Mammary epithelial cell (primary cell): ENCODE measurements at regions of chr2 and their contacts with region 1.

Region 1: DNA sequence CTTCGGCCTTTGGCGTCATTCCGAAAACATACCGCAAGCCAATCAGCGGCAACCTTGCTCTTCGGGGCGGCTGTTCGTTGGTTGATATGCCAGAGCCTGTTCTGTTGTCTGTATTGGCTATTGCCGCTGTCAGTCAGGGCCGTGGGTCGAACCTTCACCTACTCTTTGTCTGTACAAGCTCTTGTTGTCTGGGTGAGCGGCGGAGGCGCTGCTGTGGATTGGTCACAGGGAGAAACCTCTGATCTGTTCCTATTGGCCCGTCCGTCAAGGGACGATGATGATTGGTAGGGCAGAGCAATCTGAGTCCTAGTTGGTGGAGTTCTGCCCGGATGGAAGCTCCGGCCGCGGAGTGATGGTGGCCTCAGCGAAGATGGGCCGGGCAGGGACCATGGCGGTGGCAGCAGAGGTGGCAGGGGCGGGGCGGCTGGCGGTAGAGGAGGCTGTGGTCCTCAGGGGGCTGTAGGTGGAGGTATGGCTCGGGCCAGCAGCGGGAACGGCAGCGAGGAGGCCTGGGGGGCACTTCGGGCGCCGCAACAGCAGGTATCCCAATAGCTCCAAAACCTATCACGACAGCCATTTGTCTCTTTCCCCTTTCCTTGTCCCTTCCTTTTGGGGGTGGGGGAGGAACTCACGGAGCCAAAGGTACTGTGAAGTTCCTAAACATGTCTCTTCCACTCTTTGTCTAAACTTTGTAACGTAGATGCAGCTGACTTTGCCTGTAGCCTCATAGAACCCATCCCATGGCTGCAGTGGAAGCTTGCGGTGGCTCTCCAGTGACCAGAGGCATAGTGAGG is at the start of gene WBP1:
- DNase-seq: peak; percentile 100
- H3K4me3 ChIP-seq: peak within 1 kb of the TSS; percentile 82 to 94 (median 90)
- H3K27ac ChIP-seq: peak within 1 kb of the TSS; percentile 90
- H3K4me1 ChIP-seq: peaks cover 30% of the 10 kb centered on the region
- H3K27me3 ChIP-seq: no peaks in the 10 kb centered on the region
- CTCF ChIP-seq: no peak
- total RNA-seq, gene WBP1: 42.7 to 79.3 TPM

Region 2: DNA sequence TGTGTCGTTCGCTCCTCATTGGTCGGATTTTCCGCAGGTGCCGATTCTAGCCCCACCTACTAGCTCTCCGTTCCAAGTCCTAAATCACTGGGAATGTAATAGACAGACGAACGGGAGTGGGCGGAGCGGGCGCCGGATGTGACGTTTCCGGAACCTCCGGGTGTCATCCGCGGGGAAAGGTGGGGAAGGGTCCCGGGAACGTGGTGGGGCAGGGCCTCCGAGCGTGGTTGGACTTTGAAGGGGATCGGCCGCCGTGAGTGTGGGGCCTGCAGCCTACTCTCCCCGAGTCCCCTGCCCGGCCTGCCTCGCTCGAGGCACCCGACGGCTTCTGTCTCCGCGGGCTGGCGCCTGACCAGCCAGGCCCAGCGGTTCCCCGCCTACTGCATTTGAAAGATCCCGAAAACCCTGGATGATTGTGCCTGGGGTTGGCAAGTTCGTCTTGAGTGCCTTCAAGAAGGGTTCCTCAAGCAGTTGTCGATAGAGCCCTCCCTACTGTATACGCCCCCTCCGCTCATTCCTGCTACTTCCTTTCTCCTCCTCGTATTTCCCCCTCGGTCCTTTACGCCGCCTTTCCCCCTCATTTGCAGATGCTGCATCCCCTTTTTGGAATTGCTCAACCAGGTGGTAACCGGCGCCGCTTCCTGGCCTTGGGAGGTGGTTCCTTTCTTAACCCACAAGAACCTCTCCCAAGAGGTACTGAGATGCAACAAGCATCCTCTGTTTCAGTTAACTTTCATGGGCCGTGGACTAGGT is 629.3 kb before region 1 on chr2 and contains the start of gene STAMBP:
- CTCF ChIA-PET with region 1: interaction called, 10 read pairs
- dilution Hi-C with region 1: no loop called
- in situ Hi-C with region 1: no loop called
- intact Hi-C with region 1: no loop called
- DNase-seq: peak; percentile 94
- H3K4me3 ChIP-seq: peak within 1 kb of the TSS; percentile 70 to 85 (median 81)
- H3K27ac ChIP-seq: peak within 1 kb of the TSS; percentile 94
- H3K4me1 ChIP-seq: peaks cover 26% of the 10 kb centered on the region
- H3K27me3 ChIP-seq: no peaks in the 10 kb centered on the region
- CTCF ChIP-seq: no peak
- total RNA-seq, gene STAMBP: 52.2 to 77.8 TPM

Region 3: DNA sequence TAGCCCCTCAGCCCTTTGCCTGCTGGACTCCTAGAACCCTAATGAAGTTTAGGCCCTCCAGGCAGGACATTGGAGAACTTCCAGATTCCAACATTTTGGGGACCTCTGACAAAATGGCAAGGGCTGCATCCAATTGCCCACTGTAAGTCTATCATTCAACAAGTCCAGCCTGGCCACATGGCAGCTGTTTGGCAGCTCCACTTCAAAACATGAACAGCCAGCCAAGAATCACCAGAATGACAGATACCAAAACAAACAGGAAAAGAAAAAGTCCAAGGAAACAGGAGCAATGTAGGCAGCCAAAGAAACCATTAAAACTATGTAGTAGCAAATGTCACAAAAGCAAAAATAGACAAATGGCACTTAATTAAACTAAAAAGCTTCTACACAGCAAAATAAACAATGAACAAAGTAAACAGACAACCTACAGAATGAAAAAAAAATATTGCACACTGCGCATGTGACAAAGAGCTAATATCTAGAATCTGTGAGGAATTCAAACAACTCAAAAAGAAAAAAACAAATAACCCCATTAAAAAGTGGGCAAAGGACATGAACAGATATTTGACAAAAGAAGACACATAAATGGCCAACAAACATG is 140.5 kb before region 1 on chr2:
- CTCF ChIA-PET with region 1: no interaction called
- dilution Hi-C with region 1: no loop called
- in situ Hi-C with region 1: no loop called
- intact Hi-C with region 1: no loop called
- DNase-seq: no peak
- H3K4me3 ChIP-seq: no peak overlapping the region
- H3K27ac ChIP-seq: no peak overlapping the region
- H3K4me1 ChIP-seq: no peaks in the 10 kb centered on the region
- H3K27me3 ChIP-seq: no peaks in the 10 kb centered on the region
- CTCF ChIP-seq: no peak

Region 4: DNA sequence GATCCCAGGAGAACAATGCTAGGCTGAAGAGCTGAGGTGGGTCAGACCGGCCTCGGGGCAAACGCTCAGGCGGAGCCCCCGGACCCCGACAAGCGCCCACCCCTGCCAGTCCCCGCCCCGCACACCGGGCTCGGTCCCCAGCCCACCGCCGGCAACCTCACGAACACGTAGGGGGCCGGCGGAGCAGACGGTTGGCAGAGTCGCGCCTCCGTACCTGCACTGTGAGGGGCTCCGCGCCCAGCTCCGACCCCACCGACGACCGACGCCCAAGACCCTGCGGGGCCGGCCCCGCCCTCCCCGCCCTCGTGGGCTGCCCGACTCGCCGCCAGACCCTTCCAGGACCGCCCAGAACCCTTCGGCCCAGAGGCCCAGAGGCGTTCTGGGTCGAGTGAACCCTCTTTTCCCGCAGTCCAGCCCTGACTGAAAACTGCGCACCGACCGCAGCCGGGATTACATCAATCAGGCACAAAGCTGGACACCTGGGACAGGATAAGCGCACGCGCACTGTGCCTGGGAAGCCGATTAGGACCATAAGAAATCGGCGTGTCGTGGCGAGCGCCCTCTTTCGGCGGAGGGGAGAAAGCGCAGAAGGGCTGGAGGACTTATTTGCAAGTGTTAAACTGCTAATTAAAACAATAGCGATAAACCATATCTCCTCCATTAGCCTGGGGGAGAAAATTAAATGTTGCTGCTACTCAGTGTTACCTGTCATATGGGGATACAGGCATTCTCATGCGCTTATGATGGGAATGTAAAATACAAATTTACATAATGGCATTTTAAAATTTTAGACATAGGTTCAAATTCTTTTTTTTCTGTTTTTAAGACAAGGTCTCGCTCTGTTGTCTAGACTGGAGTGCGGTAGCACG is 66.5 kb before region 1 on chr2:
- CTCF ChIA-PET with region 1: no interaction called
- dilution Hi-C with region 1: loop called (anchors 5 kb)
- in situ Hi-C with region 1: no loop called
- intact Hi-C with region 1: loop called (anchors 2 kb)
- DNase-seq: peak; percentile 79
- H3K4me3 ChIP-seq: peak overlapping the region; percentile 79 to 84 (median 81)
- H3K27ac ChIP-seq: peak overlapping the region; percentile 94
- H3K4me1 ChIP-seq: peaks cover 26% of the 10 kb centered on the region
- H3K27me3 ChIP-seq: no peaks in the 10 kb centered on the region
- CTCF ChIP-seq: peak; percentile 99

Region 5: DNA sequence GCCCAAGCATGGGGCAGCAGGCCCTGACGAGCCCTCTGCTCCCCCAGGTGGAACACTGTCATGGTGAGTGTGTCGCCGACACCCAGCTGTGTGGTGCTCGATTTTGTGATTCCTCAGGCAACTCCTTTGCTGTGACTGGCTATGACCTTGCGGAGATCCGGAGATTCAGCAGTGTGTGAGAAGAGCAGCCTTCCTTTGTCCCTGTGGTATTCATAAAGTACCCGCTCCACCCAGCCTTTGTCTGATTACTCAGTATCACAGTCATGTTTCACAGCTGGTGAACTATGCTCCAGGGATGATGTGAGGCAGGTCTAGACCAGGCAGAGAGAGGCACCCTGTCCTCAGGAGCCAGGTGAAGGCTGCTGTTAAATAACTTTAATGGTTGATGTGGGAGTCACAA is 32.8 kb before region 1 on chr2:
- CTCF ChIA-PET with region 1: no interaction called
- dilution Hi-C with region 1: no loop called
- in situ Hi-C with region 1: no loop called
- intact Hi-C with region 1: loop called (anchors 1 kb)
- DNase-seq: peak; percentile 99
- H3K4me3 ChIP-seq: no peak overlapping the region
- H3K27ac ChIP-seq: peak overlapping the region; percentile 89
- H3K4me1 ChIP-seq: peaks cover 67% of the 10 kb centered on the region
- H3K27me3 ChIP-seq: no peaks in the 10 kb centered on the region
- CTCF ChIP-seq: no peak

Region 6: GRCh38 chr2:74436111-74436797 is 22.1 kb before region 1 on chr2:
- CTCF ChIA-PET with region 1: no interaction called
- dilution Hi-C with region 1: no loop called
- in situ Hi-C with region 1: no loop called
- intact Hi-C with region 1: no loop called
- DNase-seq: no peak
- H3K4me3 ChIP-seq: no peak overlapping the region
- H3K27ac ChIP-seq: no peak overlapping the region
- H3K4me1 ChIP-seq: peaks cover 29% of the 10 kb centered on the region
- H3K27me3 ChIP-seq: no peaks in the 10 kb centered on the region
- CTCF ChIP-seq: no peak

Region 7: DNA sequence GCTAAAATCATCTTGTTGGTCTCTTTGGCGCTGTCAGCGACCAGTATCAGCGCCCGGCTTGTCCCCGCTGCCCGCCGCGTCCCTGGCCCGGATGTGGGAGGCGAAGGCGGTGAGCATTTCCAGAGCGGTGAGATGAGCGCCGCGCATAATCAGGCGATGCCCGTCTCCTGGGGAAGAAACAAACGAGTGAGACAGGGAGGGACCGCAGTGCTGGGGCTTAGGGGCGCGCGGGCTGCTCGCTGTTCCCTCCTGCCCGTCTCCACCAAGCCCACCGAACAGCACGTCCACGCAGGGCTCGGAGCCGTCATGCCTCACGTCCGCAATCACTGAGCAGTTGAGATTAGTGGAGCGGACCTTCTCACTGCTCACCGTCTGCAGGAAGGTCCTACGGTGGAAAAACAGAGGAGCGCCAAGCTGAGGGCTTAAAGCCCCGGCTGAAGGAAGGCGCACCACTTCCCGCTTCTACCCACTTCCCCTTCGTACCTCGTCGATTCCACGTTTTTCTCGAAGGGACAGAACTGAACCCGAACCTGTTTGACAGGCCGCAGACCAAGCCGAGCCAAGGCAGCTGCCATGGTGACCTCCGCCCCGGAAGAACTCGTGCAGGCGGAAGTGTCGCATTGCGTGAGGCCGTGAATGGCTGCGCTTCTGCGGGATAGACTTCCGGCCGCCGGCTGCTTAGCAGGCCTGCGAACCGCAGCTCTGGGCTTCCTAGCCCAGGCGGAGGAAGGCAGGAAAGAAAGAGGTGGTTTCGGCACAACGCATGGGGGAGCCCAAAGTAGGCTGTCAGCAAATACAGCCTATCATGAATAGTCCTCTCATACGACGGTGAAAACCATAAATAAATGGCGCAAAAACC is 14.0 kb after region 1 on chr2 and contains the start of gene MRPL53:
- CTCF ChIA-PET with region 1: no interaction called
- dilution Hi-C with region 1: no loop called
- in situ Hi-C with region 1: no loop called
- intact Hi-C with region 1: loop called (anchors 1 kb)
- DNase-seq: peak; percentile 89
- H3K4me3 ChIP-seq: peak within 1 kb of the TSS; percentile 52 to 79 (median 67)
- H3K27ac ChIP-seq: peak within 1 kb of the TSS; percentile 85
- H3K4me1 ChIP-seq: peaks cover 14% of the 10 kb centered on the region
- H3K27me3 ChIP-seq: no peaks in the 10 kb centered on the region
- CTCF ChIP-seq: no peak
- total RNA-seq, gene MRPL53: 9.3 to 70.1 TPM

Region 8: GRCh38 chr2:74529357-74530238 is 71.3 kb after region 1 on chr2 and contains the starts of genes AUP1 and HTRA2:
- CTCF ChIA-PET with region 1: no interaction called
- dilution Hi-C with region 1: loop called (anchors 5 kb)
- in situ Hi-C with region 1: no loop called
- intact Hi-C with region 1: loop called (anchors 2 kb)
- DNase-seq: peak; percentile 100
- H3K4me3 ChIP-seq: peak within 1 kb of the TSS; percentile 58 to 81 (median 66)
- H3K27ac ChIP-seq: peak within 1 kb of the TSS; percentile 79
- H3K4me1 ChIP-seq: peaks cover 38% of the 10 kb centered on the region
- H3K27me3 ChIP-seq: no peaks in the 10 kb centered on the region
- CTCF ChIP-seq: no peak
- total RNA-seq, gene AUP1: 67.5 to 111 TPM
- total RNA-seq, gene HTRA2: 29.2 to 30.8 TPM